ENCODE measurements at regions of chr7 and their contacts with region 1.

Region 1: GRCh38 chr7:135509903-135510602 is at the start of gene CNOT4:
- DNase-seq: peak; percentile 94 to 96
- ATAC-seq: peak; percentile 89 to 93
- H3K4me3 ChIP-seq: peak within 1 kb of the TSS; percentile 72 to 96 (median 85)
- H3K27ac ChIP-seq: peak within 1 kb of the TSS; percentile 88 to 97 (median 94)
- H3K4me1 ChIP-seq: peaks cover 35 to 37% of the 10 kb centered on the region in 2 donors
- H3K27me3 ChIP-seq: no peaks in the 10 kb centered on the region
- CTCF ChIP-seq: no peak
- POLR2A ChIP-seq: peak; percentile 66 to 70
- total RNA-seq, gene CNOT4: 25.5 to 38.1 (median 30.7) TPM

Region 2: GRCh38 chr7:134316539-134317344 is 1193.3 kb before region 1 on chr7 and contains the start of gene SLC35B4:
- in situ Hi-C with region 1: loop called in 1 of 4 experiments (anchors 25 kb)
- intact Hi-C with region 1: no loop called
- DNase-seq: peak; percentile 97 to 98
- ATAC-seq: peak; percentile 96 to 97
- H3K4me3 ChIP-seq: peak within 1 kb of the TSS; percentile 76 to 99 (median 84)
- H3K27ac ChIP-seq: peak within 1 kb of the TSS; percentile 88 to 97 (median 94)
- H3K4me1 ChIP-seq: peaks cover 0 to 9% of the 10 kb centered on the region in 2 donors
- H3K27me3 ChIP-seq: no peaks in the 10 kb centered on the region
- CTCF ChIP-seq: peak in 4 of 5 experiments; percentile 27 to 46 (median 34)
- POLR2A ChIP-seq: peak; percentile 14 to 15
- total RNA-seq, gene SLC35B4: 1.7 to 5.0 (median 2.3) TPM

Region 3: GRCh38 chr7:134986363-134987251 is 523.4 kb before region 1 on chr7 and contains the start of gene AGBL3:
- in situ Hi-C with region 1: no loop called
- intact Hi-C with region 1: loop called (anchors 5 kb)
- DNase-seq: peak; percentile 83 to 93
- ATAC-seq: peak; percentile 96 to 99
- H3K4me3 ChIP-seq: peak within 1 kb of the TSS; percentile 75 to 92 (median 78)
- H3K27ac ChIP-seq: peak within 1 kb of the TSS; percentile 87 to 91 (median 87)
- H3K4me1 ChIP-seq: peaks cover 11 to 17% of the 10 kb centered on the region in 2 donors
- H3K27me3 ChIP-seq: no peaks in the 10 kb centered on the region
- CTCF ChIP-seq: peak; percentile 51 to 73 (median 66)
- POLR2A ChIP-seq: peak in 1 of 2 donors; percentile 60
- total RNA-seq, gene AGBL3: 0.61 to 1.9 (median 1.0) TPM

Region 4: DNA sequence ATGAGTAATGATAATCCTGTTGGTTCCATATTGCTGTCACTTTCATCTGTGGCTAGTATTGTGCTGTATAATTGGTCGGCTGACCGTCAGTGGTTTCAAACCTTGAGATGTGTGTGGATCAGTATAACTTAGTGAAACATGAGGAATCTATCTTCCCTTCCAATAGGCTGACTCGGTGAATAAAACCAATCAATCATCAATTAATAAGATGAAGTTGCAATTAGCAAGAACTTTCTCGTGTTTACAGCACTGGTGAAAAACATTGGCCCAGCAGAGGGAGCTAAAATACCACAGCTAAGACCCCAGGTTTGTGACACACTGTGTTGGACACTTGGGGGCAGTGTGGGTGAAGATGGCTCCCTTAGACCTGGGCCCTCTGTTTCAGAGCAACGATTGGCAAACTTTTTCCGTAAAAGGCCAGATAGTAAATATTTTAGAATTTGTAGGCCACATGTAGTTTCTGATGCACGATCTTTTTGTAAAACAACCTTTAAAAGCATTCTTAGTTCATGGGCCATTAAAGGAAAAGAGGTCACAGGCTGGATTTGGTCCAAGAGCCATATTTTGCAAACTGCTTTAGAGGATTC is 228.6 kb before region 1 on chr7:
- in situ Hi-C with region 1: no loop called
- intact Hi-C with region 1: loop called (anchors 1 kb)
- DNase-seq: peak; percentile 68 to 73
- ATAC-seq: peak; percentile 86 to 96
- H3K4me3 ChIP-seq: no peak overlapping the region
- H3K27ac ChIP-seq: no peak overlapping the region
- H3K4me1 ChIP-seq: peaks cover 19 to 33% of the 10 kb centered on the region in 2 donors
- H3K27me3 ChIP-seq: no peaks in the 10 kb centered on the region
- CTCF ChIP-seq: peak; percentile 88 to 98 (median 89)
- POLR2A ChIP-seq: no peak

Region 5: GRCh38 chr7:135375908-135376699 is 133.9 kb before region 1 on chr7:
- in situ Hi-C with region 1: no loop called
- intact Hi-C with region 1: no loop called
- DNase-seq: no peak
- ATAC-seq: no peak
- H3K4me3 ChIP-seq: no peak overlapping the region
- H3K27ac ChIP-seq: no peak overlapping the region
- H3K4me1 ChIP-seq: no peaks in the 10 kb centered on the region
- H3K27me3 ChIP-seq: no peaks in the 10 kb centered on the region
- CTCF ChIP-seq: no peak
- POLR2A ChIP-seq: no peak

Region 6: DNA sequence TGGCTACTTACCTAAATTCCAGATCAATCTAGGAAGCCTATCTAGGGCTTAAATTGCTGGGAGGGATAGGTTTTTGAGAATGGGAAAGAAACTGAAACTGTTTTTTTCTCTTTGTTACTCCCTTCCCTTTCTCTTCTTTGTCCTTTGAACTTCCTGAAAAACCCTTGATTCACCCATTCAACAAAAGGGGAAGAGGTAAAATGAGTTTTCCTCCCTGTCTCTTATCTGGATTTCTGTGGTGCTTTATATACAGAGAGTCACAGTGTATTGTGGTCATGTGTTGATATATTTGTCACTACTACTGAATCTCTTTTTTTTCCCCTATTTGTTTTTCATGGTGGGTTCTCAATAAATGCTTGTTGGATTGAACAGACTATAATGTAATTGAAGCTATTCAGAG is 27.9 kb after region 1 on chr7:
- in situ Hi-C with region 1: no loop called
- intact Hi-C with region 1: no loop called
- DNase-seq: no peak
- ATAC-seq: no peak
- H3K4me3 ChIP-seq: no peak overlapping the region
- H3K27ac ChIP-seq: no peak overlapping the region
- H3K4me1 ChIP-seq: no peaks in the 10 kb centered on the region
- H3K27me3 ChIP-seq: no peaks in the 10 kb centered on the region
- CTCF ChIP-seq: no peak
- POLR2A ChIP-seq: no peak

Region 7: DNA sequence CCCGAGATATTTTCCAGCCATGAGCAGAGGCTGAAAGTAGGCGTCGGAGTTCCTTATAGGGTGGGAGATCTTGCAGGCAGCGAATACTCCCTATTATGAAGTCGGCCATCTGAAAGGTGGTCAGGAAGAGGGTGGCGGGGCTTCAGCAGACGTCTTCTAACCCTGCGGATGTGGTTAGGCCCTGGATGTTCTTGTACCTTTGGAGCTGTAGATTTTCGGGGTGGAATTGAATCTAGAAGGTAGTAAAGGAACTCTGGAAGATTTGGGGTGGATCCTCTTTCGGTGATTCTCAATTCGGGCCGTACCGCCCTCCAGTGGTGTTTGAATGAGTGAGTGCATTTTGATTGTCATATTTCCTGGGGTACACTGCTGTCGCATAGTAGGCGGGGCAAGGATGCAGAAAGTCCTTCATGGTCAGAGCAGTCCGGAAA is 48.3 kb after region 1 on chr7:
- in situ Hi-C with region 1: loop called in 2 of 4 experiments (anchors 5 kb)
- intact Hi-C with region 1: loop called (anchors 1 kb)
- DNase-seq: peak; percentile 6 to 20
- ATAC-seq: peak; percentile 32 to 51
- H3K4me3 ChIP-seq: peak overlapping the region; percentile 75 to 97 (median 86)
- H3K27ac ChIP-seq: peak overlapping the region; percentile 85 to 96 (median 94)
- H3K4me1 ChIP-seq: peaks cover 6 to 14% of the 10 kb centered on the region in 2 donors
- H3K27me3 ChIP-seq: no peaks in the 10 kb centered on the region
- CTCF ChIP-seq: peak in 3 of 5 experiments; percentile 38 to 48 (median 44)
- POLR2A ChIP-seq: no peak

Region 8: DNA sequence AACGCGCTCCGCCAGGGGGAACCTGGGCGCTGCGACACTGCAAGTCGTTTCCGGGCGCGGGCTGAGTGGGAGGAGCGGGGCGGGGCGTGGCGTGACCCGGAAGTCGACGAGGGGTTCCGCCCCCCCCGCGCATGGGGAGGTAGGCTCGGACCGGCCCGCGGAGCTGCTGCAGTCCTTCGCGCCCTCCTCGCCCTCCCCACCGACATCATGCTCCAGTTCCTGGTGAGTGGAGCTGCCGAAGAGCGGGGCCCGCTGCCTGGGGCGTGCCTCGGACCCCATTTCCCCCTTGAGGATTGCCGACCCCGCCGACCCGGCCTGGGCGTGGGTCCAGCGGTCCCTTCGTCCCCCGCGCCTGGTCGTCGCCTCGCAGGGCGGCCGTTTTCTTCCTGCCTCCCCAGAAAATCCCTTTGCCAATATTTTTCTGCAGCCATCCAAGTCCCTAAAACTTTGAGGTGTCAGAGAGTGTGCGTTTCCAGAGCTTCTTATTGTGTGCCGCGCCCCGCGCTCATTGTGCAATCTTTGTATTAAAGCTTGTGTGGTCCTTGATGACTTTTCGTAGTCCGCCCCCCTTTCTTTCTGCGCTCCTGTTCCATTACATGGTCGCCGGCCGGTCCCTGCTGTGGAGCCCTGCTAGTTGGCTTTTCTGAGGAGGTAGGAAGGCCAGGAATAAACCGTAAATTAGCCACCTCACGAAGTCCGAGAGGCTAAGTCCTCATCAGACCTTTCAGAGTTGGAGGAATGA is 152.5 kb after region 1 on chr7 and contains the start of gene STMP1:
- in situ Hi-C with region 1: no loop called
- intact Hi-C with region 1: loop called (anchors 5 kb)
- DNase-seq: peak; percentile 93 to 95
- ATAC-seq: peak; percentile 93 to 94
- H3K4me3 ChIP-seq: peak within 1 kb of the TSS; percentile 81 to 100 (median 90)
- H3K27ac ChIP-seq: peak within 1 kb of the TSS; percentile 91 to 99 (median 94)
- H3K4me1 ChIP-seq: peaks cover 35 to 47% of the 10 kb centered on the region in 2 donors
- H3K27me3 ChIP-seq: no peaks in the 10 kb centered on the region
- CTCF ChIP-seq: peak in 2 of 5 experiments; percentile 87 to 91
- POLR2A ChIP-seq: peak; percentile 90 to 93
- total RNA-seq, gene STMP1: 7.7 to 19.9 (median 11.8) TPM

Region 9: GRCh38 chr7:135977007-135977741 is 467.1 kb after region 1 on chr7 and contains the start of gene MTPN:
- in situ Hi-C with region 1: no loop called
- intact Hi-C with region 1: loop called (anchors 5 kb)
- DNase-seq: peak; percentile 97 to 98
- ATAC-seq: peak; percentile 99
- H3K4me3 ChIP-seq: peak within 1 kb of the TSS; percentile 85 to 99 (median 92)
- H3K27ac ChIP-seq: peak within 1 kb of the TSS; percentile 89 to 96 (median 92)
- H3K4me1 ChIP-seq: peaks cover 30 to 43% of the 10 kb centered on the region in 2 donors
- H3K27me3 ChIP-seq: no peaks in the 10 kb centered on the region
- CTCF ChIP-seq: no peak
- POLR2A ChIP-seq: peak; percentile 76 to 77
- total RNA-seq, gene MTPN: 48.5 to 94.2 (median 58.7) TPM